ENCODE measurements at regions of chr18 and their contacts with region 1.

Region 1: DNA sequence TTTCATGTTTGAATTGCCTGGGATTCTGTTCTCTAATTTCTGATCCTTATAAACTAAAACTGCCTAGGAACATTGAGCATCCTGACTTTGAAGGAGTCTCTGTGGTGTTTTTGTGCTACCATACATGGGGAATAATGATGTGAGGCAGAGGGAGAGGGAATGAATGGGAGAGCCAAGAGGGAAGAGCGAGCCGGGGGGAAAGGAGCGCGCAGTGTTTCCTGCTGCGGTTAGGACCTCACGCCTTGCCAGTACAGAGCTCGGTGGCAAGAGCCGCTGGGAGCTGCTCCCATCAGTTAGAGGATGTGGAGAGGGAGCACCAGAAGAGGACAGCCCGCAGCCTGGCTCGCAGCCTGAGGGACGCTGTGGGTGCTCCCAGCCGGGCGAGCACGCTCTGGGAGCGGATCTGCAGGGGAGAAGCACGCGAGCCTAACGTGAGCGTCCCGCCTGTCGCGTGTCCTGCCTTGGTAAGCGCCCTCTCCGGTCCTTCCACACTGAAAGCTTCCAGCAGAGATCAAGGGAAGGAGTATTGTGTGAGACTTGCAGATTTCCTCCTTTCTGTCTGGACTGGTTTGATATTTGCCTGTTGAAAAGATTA is 114.7 kb downstream of the FAM210A start:
- DNase-seq: peak; percentile 75 to 89 (median 87)
- ATAC-seq: peak; percentile 70 to 84
- H3K4me3 ChIP-seq: peak overlapping the region; percentile 46
- H3K27ac ChIP-seq: peak overlapping the region; percentile 92
- H3K4me1 ChIP-seq: peaks cover 4% of the 10 kb centered on the region
- H3K27me3 ChIP-seq: no peaks in the 10 kb centered on the region

Region 2: DNA sequence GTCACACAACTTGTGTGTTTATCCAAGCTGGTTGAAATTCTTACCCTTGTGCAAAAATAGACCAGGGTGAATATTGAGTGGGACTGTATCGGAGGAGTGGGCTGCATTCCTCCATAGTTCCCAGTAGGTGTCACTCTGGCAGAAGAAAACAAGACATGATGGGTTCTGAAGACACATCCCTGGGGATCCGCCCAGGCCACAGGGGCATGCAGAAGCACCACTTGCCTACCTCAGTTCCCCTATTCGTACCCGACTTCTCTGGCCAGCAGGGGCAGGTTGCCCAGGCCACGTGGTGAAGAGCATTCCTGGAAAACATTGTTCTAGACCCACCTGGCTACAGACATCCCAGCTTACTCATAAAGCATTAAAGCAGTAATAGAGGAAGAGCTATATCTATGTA is 53.6 kb before region 1 on chr18:
- intact Hi-C with region 1: loop called in 1 of 4 experiments (anchors 5 kb)
- DNase-seq: peak; percentile 56 to 78 (median 76)
- ATAC-seq: peak; percentile 80 to 84
- H3K4me3 ChIP-seq: no peak overlapping the region
- H3K27ac ChIP-seq: peak overlapping the region; percentile 58
- H3K4me1 ChIP-seq: peaks cover 8% of the 10 kb centered on the region
- H3K27me3 ChIP-seq: no peaks in the 10 kb centered on the region

Region 3: DNA sequence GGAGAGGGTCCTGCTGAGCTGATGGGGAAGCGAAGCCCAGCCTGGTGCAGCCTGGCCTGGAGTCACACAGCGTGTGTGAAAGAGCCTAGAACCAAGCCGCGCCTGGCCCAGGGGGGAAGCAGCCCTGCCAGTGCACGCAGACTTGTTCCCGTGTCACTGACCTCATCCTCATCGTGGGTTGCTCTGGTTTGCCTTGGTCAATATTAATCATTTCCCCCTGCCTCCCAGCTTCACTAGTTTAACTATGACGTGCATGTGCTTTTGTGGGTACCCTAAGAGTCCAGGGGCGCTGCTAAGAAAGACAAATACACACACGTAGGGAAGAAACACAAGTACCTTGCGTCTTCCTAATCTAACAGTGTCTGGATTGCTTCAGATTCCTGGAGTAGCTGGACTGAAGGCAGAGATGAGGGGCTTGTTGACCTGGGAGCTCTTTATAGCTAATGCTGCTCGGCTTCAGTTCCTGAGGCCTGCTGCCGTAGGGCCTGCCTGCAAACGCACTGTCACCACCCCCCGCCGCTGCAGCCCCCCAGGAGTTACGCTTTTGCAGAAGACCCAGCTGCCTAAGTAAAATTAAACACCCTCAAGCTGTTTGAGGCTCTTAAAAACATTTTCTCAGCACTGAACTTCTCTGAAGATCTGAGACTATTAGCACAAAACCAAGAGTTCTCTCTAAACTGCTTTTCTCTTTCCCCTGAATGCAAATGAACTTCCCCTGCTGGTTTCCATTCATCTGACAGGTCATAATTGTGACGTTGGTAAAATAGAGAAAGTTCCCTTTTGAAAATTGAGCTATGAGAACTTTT is 44.6 kb before region 1 on chr18:
- intact Hi-C with region 1: loop called in 2 of 4 experiments (anchors 5 kb)
- DNase-seq: peak; percentile 69 to 77 (median 70)
- ATAC-seq: peak; percentile 3 to 12
- H3K4me3 ChIP-seq: no peak overlapping the region
- H3K27ac ChIP-seq: peak overlapping the region; percentile 53
- H3K4me1 ChIP-seq: peaks cover 14% of the 10 kb centered on the region
- H3K27me3 ChIP-seq: no peaks in the 10 kb centered on the region

Region 4: GRCh38 chr18:13660510-13660909 is 48.8 kb after region 1 on chr18:
- intact Hi-C with region 1: loop called in 1 of 4 experiments (anchors 10 kb)
- DNase-seq: peak in 2 of 3 donors; percentile 45 to 63
- ATAC-seq: peak; percentile 86 to 91
- H3K4me3 ChIP-seq: no peak overlapping the region
- H3K27ac ChIP-seq: no peak overlapping the region
- H3K4me1 ChIP-seq: peaks cover 6% of the 10 kb centered on the region
- H3K27me3 ChIP-seq: no peaks in the 10 kb centered on the region